ENCODE measurements at regions of chr11 and their contacts with region 1.

Region 1: DNA sequence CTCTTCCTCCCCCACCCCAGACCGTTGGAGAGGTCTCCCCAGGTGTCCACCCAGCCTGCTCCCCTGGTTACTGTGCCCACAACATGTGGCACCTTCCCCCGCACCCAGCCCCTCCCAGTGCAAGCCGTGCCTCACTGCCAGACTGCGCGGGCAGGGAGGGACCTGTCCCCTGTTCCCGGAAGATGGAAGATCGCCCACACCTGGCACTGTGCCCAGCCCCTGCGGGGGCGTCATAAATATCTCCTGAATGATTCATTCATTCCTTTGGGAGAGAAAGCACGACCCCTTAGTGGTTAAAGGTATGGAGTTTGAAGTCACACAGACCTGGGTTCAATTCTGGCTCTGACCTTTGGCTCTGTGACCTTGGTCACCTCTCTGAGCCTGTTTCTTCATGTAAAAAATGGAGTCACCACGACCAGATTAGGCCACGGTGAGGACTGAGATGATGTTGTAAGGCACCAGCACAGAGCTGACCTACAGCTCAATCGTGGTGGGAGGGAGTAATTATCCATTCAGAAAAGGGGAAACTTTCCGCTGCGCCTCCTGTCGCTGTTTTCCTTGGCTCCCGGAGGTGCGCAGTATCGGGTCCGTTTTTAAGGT is 506 bp upstream of the SYT12 start:
- DNase-seq: no peak
- ATAC-seq: no peak; the same call in 1 of the 3 replicates
- H3K4me3 ChIP-seq: peak overlapping the region; percentile 40 to 67 (median 45); a peak in 5 of 6 replicates
- H3K27ac ChIP-seq: no peak overlapping the region
- H3K4me1 ChIP-seq: peaks cover 18% of the 10 kb centered on the region
- H3K27me3 ChIP-seq: peaks cover 12 to 38% of the 10 kb centered on the region in 2 experiments; a peak in 4 of 5 replicates
- CTCF ChIP-seq: no peak
- EP300 ChIP-seq: no peak
- POLR2A ChIP-seq: no peak
- RAD21 ChIP-seq: no peak

Region 2: DNA sequence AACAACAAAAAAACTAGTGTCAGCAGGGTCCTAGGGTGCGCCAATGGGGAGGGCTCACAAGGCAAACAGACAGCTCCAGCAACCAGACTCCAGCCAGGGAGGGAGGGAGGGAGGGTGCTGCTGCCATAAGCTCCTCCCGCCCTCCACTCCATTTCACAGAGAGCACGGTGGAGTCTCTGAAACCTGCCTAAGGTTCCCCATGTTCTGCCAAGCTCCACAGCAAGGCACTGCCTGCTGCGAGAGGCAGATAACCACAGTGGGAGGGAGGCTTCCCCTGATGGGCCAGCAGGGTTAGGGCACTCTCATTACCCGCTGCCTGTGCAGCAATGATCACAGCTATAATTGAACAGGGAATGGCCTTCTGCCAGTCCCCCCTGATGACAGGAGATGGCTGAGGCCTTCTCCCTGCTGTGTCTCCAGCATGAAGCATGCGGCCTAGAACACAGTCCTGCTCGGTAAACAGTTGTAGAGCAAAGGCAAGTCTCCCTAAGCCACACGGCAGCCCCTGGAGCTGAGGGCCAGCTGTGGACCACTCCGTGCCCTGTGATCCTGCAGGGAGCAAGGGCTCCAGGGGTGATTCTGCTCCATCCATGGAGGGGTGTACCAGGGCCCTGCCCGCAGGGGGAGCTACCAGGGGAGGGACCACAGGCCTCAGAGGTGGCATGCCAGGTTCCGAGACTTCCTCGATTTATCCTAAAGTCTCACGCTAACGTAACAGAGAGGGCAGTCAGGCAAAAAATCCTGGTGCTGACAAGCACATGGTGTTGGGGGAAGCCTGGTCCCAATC is 107.2 kb before region 1 on chr11:
- CTCF ChIA-PET with region 1: no interaction called
- POLR2A ChIA-PET with region 1: no interaction called
- in situ Hi-C with region 1: no loop called
- intact Hi-C with region 1: no loop called
- DNase-seq: no peak
- ATAC-seq: no peak; the same call in 2 of the 3 replicates
- H3K4me3 ChIP-seq: no peak overlapping the region
- H3K27ac ChIP-seq: no peak overlapping the region
- H3K4me1 ChIP-seq: peaks cover 60% of the 10 kb centered on the region
- H3K27me3 ChIP-seq: no peaks in the 10 kb centered on the region
- CTCF ChIP-seq: 0 out of 2 replicates have a peak, but pooled peaks have one; percentile 12
- EP300 ChIP-seq: no peak
- POLR2A ChIP-seq: no peak
- RAD21 ChIP-seq: no peak

Region 3: DNA sequence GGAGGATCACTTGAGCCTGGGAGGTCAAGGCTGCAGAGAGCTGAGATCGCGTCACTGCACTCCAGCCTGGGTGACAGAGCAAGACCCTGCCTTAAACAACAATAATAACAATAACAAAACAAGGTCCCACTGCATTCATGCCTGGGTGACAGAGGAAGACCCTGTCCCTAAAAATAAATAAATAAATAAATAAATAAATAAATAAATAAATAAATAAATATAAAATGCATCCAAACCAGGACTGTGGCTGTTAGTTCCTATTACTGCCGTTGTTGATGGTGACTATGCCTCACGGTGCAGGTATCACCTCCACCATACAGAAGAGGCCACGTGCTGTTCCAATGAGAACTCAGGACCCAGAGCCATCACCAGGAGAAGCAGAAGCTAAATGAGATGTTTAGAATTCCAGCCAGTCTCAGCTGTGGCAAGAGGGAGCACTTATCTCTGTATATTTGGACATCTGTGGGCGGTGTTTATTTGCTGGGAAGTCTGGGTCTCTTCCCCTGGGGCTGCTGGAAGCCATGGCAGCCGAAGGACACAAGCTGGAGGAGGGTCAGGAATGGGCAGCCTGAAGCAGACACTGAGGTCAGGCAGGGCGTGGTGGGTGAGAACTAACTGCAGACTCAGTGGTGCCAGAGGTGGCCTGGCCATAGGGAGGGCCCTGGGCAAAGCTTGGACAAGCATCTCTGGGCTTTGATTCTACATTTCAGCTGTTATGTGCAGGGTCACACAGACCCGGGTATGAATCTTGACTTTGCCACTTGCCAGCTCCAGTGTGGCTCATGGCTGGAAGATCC is 25.6 kb before region 1 on chr11:
- CTCF ChIA-PET with region 1: no interaction called
- POLR2A ChIA-PET with region 1: no interaction called
- in situ Hi-C with region 1: no loop called
- intact Hi-C with region 1: loop called (anchors 1 kb)
- DNase-seq: peak; percentile 93
- ATAC-seq: peak; percentile 97
- H3K4me3 ChIP-seq: no peak overlapping the region
- H3K27ac ChIP-seq: no peak overlapping the region
- H3K4me1 ChIP-seq: peaks cover 26% of the 10 kb centered on the region
- H3K27me3 ChIP-seq: no peaks in the 10 kb centered on the region
- CTCF ChIP-seq: 0 out of 2 replicates have a peak, but pooled peaks have one; percentile 6
- EP300 ChIP-seq: peak in 1 of 2 experiments; percentile 47; a peak in 1 of 4 replicates
- POLR2A ChIP-seq: no peak
- RAD21 ChIP-seq: no peak